Right ventricle myocardium inferior (tissue), 1 donor: ENCODE measurements at regions of chr1 and their contacts with region 1.

Region 1: GRCh38 chr1:54547601-54548388 is at the start of gene ACOT11:
- DNase-seq: peak; percentile 91
- ATAC-seq: peak; percentile 92
- total RNA-seq, gene ACOT11: 43.4 TPM

Region 2: GRCh38 chr1:54581621-54582035 is 33.8 kb after region 1 on chr1:
- intact Hi-C with region 1: loop called (anchors 1 kb)
- DNase-seq: peak; percentile 90
- ATAC-seq: peak; percentile 90

Region 3: DNA sequence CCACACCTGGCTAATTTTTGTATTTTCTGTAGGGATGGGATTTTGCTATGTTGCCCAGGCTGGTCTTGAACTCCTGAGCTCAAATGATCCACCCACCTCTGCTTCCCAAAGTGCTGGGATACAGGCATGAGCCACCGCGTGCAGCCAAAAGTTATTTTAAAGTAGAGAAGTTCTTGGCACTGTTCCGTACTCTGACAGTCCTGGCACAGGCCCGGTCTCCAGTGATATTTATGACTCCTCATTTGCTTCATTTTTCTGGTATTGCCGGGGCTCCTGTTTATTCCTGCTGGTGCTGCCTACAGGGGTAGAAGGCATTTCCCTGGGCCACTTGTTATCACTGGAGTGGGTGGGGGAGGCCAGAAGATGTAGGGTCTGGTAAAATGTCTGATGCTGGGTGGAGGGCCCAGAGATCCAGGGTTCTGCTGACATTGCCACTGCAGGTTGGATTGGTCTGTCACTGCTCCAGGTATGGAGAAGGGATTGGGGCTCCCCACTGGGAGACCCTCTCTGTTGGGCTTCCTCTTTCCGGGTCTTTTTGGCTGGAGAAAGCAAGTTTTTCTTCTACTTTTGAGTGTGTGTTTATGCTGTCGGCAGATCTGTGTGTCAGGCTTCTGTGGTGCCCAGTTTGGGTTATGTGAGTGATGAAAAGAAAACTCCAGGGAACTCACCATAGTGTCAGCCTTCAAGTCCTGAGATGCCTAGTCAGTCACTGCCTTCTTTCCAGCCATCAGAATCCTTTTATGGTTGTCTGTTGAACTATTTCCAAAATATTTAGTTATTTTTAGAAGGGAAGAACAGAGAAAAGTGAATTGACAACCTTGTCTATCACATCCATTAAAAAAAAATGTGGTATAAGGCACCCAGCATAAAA is 98.2 kb after region 1 on chr1:
- intact Hi-C with region 1: loop called (anchors 1 kb)
- DNase-seq: no peak
- ATAC-seq: peak; percentile 82

Region 4: GRCh38 chr1:54715493-54716298 is 167.9 kb after region 1 on chr1 and contains the start of gene TTC4:
- intact Hi-C with region 1: loop called (anchors 5 kb)
- DNase-seq: peak; percentile 93
- ATAC-seq: peak; percentile 99
- total RNA-seq, gene TTC4: 12.8 TPM